MCF 10A (cell line): ENCODE measurements at regions of chr6 and their contacts with region 1.

Region 1: DNA sequence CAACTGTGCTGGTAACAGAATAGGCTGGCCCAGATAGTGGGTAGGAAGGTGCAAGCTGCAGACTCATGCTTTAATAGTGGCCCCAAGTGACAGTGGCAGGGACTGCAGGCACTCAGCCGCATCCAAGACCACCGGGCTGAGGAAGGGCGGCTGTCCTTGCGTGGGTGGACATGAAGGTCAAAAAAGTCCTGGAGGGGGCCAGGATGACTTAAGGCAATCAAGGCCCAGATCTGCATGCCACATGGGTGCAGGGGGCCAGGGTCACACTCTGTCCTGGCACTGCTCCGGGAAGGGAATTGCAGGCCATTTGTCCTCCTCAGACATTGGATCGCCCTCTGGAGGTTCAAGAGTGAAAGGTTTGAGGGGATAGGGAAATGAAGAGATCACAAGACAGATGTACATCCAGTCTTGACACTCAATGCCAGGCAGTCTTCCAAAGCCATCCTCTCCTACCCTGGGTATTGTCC is 10.4 kb upstream of the VNN2 start:
- DNase-seq: peak; percentile 67
- H3K4me3 Mint-ChIP-seq: no peak overlapping the region
- H3K27ac Mint-ChIP-seq: no peak overlapping the region
- H3K4me1 Mint-ChIP-seq: peaks cover 21% of the 10 kb centered on the region
- H3K27me3 Mint-ChIP-seq: no peaks in the 10 kb centered on the region
- CTCF ChIP-seq: peak; percentile 45

Region 2: DNA sequence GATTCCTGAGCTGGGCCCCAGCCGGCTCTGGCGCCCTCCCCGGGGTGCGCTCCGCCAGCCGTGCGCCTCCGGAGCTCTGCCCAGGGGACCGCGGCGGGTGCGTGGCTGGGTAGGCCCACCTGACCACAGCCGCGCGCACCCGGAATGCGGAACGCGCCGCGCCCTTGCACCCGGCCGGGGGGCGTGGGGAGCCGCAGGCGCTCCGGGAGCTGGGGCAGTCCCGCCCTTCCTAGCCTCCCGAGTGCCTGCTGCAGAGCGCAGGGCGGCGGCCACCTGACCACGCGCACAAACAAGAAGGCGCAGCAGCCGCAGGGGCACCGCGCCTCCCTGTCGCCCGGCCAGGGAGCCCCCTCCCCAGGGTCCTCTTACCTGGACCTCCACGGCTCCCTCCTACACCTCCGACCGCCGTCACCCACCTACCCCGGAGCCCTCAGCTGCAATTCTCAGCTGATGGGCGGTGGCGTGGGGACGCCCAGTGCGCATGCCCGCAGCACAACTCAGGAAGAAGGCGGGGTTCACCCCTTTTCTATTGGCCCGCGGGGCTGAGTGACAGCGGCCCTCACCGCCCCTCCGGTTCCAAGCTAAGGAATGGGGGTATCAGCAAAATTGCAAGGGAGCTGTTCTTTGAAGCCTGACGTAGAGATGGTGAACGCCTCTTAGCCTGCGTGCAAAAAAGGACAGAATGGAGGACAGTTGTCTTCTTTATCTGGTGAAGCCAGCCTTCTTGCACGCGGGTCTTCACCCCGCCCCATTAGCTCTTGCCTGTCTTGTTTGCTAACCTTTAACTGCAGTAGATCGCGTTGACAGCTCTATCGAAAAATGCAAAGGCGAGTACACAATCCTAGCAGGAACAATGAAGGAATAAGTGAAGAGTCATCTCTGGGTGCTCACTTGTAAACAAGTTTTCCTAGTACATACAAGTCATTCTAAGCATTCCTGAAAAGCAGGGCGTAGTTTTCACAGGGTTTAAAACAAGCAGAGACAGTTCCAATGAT is 255.1 kb before region 1 on chr6 and contains the start of gene STX7:
- CTCF ChIA-PET with region 1: no interaction called
- POLR2A ChIA-PET with region 1: interaction called, 15 read pairs
- intact Hi-C with region 1: no loop called
- DNase-seq: peak; percentile 90
- H3K4me3 Mint-ChIP-seq: peak within 1 kb of the TSS; percentile 92
- H3K27ac Mint-ChIP-seq: peak within 1 kb of the TSS; percentile 82
- H3K4me1 Mint-ChIP-seq: peaks cover 27% of the 10 kb centered on the region
- H3K27me3 Mint-ChIP-seq: no peaks in the 10 kb centered on the region
- CTCF ChIP-seq: no peak
- total RNA-seq, gene STX7: 31.3 and 33.0 TPM in 2 replicates

Region 3: GRCh38 chr6:132551214-132551613 is 216.9 kb before region 1 on chr6:
- CTCF ChIA-PET with region 1: no interaction called
- POLR2A ChIA-PET with region 1: no interaction called
- intact Hi-C with region 1: no loop called
- DNase-seq: no peak
- H3K4me3 Mint-ChIP-seq: no peak overlapping the region
- H3K27ac Mint-ChIP-seq: no peak overlapping the region
- H3K4me1 Mint-ChIP-seq: no peaks in the 10 kb centered on the region
- H3K27me3 Mint-ChIP-seq: peaks cover 99% of the 10 kb centered on the region
- CTCF ChIP-seq: no peak

Region 4: DNA sequence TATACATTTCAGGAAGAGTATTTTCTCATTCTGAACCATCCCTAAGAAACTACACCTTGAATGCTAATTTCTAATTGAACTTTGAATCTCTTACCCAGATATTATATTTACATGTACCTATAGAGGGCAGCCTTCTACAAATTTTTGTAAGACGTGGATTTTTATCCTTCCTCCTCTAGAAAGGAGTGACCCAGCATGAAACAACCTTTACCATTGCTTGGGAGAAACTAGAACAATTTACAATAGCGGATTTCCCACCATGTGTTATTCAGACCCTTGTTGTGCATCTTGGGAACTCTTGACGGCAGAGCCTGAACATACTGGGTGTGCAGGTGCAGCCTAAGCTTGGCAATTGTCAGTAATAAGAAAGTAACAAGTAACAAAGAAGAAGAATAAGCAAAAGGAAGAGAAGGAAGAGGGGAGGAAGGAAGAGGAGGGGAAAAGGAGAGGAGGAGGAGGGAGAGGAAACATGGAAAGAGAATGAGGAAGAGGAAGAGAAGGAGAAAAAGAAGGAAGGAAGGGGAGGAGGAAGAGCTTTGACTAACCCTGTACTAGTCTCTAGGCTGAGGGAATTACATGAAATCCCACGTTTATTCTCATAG is 98.3 kb before region 1 on chr6:
- CTCF ChIA-PET with region 1: interaction called, 103 read pairs
- POLR2A ChIA-PET with region 1: interaction called, 8 read pairs
- intact Hi-C with region 1: loop called (anchors 1 kb)
- DNase-seq: peak; percentile 51
- H3K4me3 Mint-ChIP-seq: no peak overlapping the region
- H3K27ac Mint-ChIP-seq: no peak overlapping the region
- H3K4me1 Mint-ChIP-seq: peaks cover 7% of the 10 kb centered on the region
- H3K27me3 Mint-ChIP-seq: no peaks in the 10 kb centered on the region
- CTCF ChIP-seq: peak; percentile 54

Region 5: DNA sequence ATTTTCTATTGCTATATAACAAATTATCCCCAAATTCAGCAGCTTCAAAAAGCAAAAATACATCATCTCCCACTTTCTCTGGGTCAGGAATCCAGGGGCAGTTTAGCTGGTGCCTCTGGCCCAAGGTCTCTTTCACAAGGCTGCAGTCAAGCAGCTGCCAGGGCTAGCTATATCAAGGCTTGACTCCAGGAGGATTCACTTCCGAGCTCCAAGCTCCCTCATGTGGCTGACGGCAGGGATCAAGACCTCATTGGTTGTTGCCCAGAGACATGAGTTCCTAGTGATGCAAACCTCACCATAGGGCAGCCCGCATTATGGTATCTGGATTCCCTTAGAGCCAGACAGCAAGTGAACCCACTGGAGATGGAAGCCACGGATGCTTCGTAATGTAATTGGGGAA is 52.9 kb before region 1 on chr6:
- CTCF ChIA-PET with region 1: interaction called, 10 read pairs
- POLR2A ChIA-PET with region 1: interaction called, 4 read pairs
- intact Hi-C with region 1: loop called (anchors 1 kb)
- DNase-seq: peak; percentile 84
- H3K4me3 Mint-ChIP-seq: no peak overlapping the region
- H3K27ac Mint-ChIP-seq: no peak overlapping the region
- H3K4me1 Mint-ChIP-seq: peaks cover 11% of the 10 kb centered on the region
- H3K27me3 Mint-ChIP-seq: no peaks in the 10 kb centered on the region
- CTCF ChIP-seq: peak; percentile 51

Region 6: GRCh38 chr6:132749111-132749510 is 19.0 kb before region 1 on chr6:
- CTCF ChIA-PET with region 1: interaction called, 6 read pairs
- POLR2A ChIA-PET with region 1: interaction called, 10 read pairs
- intact Hi-C with region 1: no loop called
- DNase-seq: peak; percentile 53
- H3K4me3 Mint-ChIP-seq: no peak overlapping the region
- H3K27ac Mint-ChIP-seq: peak overlapping the region; percentile 61
- H3K4me1 Mint-ChIP-seq: peaks cover 19% of the 10 kb centered on the region
- H3K27me3 Mint-ChIP-seq: no peaks in the 10 kb centered on the region
- CTCF ChIP-seq: no peak

Region 7: DNA sequence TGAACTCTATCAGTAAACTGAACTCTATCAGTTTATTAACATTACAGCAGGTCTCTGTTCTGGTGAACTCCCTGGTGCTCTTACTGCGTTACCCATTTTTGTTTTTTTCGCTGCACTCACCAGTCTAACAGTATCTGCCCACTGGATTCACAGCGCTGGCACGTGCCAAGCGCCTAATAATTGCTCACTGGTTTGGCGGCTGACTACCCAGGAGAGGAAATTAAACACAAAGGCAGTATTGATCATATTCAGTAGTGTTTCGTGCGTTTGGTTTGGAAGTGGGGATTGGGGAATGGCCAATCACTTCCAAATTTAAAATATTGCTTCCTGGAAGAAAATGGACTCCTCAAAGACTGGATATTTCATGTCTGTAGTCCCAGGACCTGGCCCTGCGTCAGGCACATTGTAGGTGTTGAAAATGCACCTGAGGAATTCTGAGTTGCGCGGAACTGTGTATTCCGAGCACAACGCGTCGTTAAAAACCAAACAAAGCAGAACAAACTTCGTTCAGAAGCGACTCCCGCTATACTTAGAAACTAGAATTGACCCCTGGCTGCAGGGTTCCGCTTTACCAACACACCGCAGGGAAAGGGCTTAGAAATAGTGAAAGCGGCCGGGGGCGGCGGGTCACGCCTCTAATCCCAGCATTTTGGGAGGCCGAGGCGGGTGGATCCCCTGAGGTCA is 45.2 kb after region 1 on chr6:
- CTCF ChIA-PET with region 1: interaction called, 4 read pairs
- POLR2A ChIA-PET with region 1: interaction called, 16 read pairs
- intact Hi-C with region 1: no loop called
- DNase-seq: peak; percentile 67
- H3K4me3 Mint-ChIP-seq: peak overlapping the region; percentile 96
- H3K27ac Mint-ChIP-seq: peak overlapping the region; percentile 99
- H3K4me1 Mint-ChIP-seq: peaks cover 25% of the 10 kb centered on the region
- H3K27me3 Mint-ChIP-seq: no peaks in the 10 kb centered on the region
- CTCF ChIP-seq: no peak